Activated B cell treated with CpG ODN at 0.5 μM for 24 hours (primary cell): ENCODE measurements at regions of chr15 and their contacts with region 1.

Region 1: DNA sequence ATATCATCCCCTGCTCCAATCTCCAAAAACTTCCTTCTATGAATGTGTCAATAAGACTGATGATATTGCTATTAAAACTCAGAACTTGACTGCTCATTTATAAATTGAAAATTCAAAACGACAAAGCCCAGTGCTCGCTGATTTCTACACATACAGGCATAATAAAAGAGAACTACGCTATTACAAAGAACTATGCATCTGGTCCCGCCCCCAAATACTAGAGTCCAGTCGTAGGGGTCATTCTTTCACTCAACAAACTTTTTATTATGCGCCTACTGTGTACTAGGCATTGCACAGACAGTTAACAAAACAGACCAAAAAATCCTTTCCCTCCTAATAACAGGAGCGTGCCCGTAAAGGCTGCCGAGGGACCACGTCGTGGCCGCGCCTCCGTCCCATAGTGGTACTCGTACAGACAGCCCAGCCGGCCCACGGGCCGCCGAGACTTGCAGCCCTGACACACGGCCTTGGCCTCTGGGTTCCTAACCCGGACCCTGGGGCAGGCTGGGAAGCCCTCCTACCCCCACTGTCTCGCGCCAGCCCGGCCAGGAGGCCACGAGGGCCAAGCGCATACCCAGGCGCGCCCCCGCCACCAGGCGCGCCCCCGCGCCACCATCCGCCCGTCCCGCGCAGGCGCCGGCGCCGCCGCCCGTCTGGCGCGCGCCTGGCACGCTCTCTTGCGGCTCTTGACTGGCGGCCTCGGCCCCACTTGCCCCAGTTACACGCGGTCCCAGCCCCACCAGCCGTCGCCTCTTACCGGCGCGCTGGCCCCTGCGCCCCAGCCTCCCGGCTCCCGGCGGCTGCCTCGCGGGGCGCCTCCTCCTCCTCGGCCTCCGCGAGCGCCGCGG is 757 bp downstream of the AVEN start:
- DNase-seq: peak; percentile 71
- ATAC-seq: peak; percentile 79
- H3K4me3 Mint-ChIP-seq: peak overlapping the region; percentile 92
- H3K27ac Mint-ChIP-seq: peak overlapping the region; percentile 89
- H3K4me1 Mint-ChIP-seq: peaks cover 18% of the 10 kb centered on the region
- H3K27me3 Mint-ChIP-seq: no peaks in the 10 kb centered on the region
- CTCF ChIP-seq: no peak

Region 2: GRCh38 chr15:34056936-34057335 is 18.7 kb after region 1 on chr15:
- CTCF ChIA-PET with region 1: no interaction called
- POLR2A ChIA-PET with region 1: interaction called, 3 read pairs
- intact Hi-C with region 1: loop called (anchors 1 kb)
- DNase-seq: no peak
- ATAC-seq: no peak
- H3K4me3 Mint-ChIP-seq: no peak overlapping the region
- H3K27ac Mint-ChIP-seq: no peak overlapping the region
- H3K4me1 Mint-ChIP-seq: peaks cover 4% of the 10 kb centered on the region
- H3K27me3 Mint-ChIP-seq: no peaks in the 10 kb centered on the region
- CTCF ChIP-seq: no peak

Region 3: GRCh38 chr15:34223904-34224596 is 185.8 kb after region 1 on chr15:
- CTCF ChIA-PET with region 1: no interaction called
- POLR2A ChIA-PET with region 1: interaction called, 11 read pairs
- intact Hi-C with region 1: no loop called
- DNase-seq: no peak
- ATAC-seq: peak; percentile 7
- H3K4me3 Mint-ChIP-seq: peak overlapping the region; percentile 92
- H3K27ac Mint-ChIP-seq: peak overlapping the region; percentile 96
- H3K4me1 Mint-ChIP-seq: peaks cover 27% of the 10 kb centered on the region
- H3K27me3 Mint-ChIP-seq: peaks cover 1% of the 10 kb centered on the region
- CTCF ChIP-seq: no peak

Region 4: DNA sequence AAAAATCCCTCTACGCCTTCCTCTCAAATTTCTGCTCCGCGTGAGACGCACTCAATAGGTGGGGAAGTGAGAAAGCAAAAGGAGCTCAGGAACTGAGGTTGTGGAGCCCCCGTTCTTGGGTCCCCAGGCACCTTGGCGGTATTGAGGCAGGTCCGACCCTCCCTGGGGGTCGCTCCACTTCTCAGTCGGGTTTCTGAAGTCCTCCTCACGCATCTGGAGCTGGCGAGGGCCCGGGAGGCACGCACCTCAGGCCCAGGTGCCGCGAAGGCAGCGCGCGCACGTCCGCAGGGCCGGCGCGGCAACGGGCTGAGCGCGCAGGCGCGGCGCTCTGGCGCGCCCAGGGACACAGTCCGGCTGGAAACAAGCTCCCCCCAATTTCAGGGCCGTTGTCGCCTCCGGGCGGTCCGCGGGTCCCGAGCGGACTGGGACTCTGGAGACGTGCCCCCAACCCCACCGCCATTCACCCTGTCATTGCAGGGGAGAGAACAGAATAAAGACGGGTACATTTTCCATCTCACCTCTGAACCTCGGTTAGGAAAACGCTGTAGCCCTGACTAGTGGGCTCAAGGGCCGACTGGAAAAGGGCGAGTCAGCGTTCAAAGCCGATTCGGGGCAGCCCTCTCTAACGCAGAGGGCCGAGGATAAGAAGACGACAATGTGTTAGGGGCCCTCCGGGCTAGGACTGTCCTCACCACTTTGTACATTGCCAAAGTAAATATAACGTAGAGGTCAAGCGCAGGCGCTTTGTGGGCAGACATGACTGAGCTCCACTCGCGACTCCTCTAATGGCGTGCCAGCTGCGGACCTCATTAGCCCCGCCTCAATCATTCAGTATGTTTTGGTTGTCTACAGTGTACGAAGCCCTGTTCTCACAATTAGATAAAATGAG is 950.0 kb after region 1 on chr15 and contains the start of gene ZNF770:
- CTCF ChIA-PET with region 1: no interaction called
- POLR2A ChIA-PET with region 1: no interaction called
- intact Hi-C with region 1: loop called (anchors 2 kb)
- DNase-seq: peak; percentile 92
- ATAC-seq: peak; percentile 85
- H3K4me3 Mint-ChIP-seq: peak within 1 kb of the TSS; percentile 98
- H3K27ac Mint-ChIP-seq: peak within 1 kb of the TSS; percentile 98
- H3K4me1 Mint-ChIP-seq: peaks cover 37% of the 10 kb centered on the region
- H3K27me3 Mint-ChIP-seq: no peaks in the 10 kb centered on the region
- CTCF ChIP-seq: no peak
- total RNA-seq, gene ZNF770: 46.8 TPM in 2 replicates